CD8-positive, alpha-beta T cell (primary cell): ENCODE measurements at regions of chr2 and their contacts with region 1.

Region 1: GRCh38 chr2:60756191-60757041 is at the start of gene PAPOLG:
- DNase-seq: peak; percentile 94 to 98 (median 97)
- ATAC-seq: peak; percentile 98
- H3K4me3 ChIP-seq: peak within 1 kb of the TSS; percentile 85 to 98
- H3K4me3 Mint-ChIP-seq: peak within 1 kb of the TSS; percentile 100
- H3K27ac ChIP-seq: peak within 1 kb of the TSS; percentile 86 to 91
- H3K27ac Mint-ChIP-seq: peak within 1 kb of the TSS; percentile 100
- H3K4me1 ChIP-seq: peaks cover 20% of the 10 kb centered on the region
- H3K4me1 Mint-ChIP-seq: peaks cover 43% of the 10 kb centered on the region
- H3K27me3 ChIP-seq: no peaks in the 10 kb centered on the region
- H3K27me3 Mint-ChIP-seq: no peaks in the 10 kb centered on the region
- CTCF ChIP-seq: no peak
- total RNA-seq, gene PAPOLG: 19.1 to 22.3 TPM

Region 2: GRCh38 chr2:59912042-59912441 is 844.4 kb before region 1 on chr2:
- CTCF ChIA-PET with region 1: no interaction called
- POLR2A ChIA-PET with region 1: no interaction called
- intact Hi-C with region 1: no loop called
- DNase-seq: peak in 1 of 9 experiments; percentile 11
- ATAC-seq: no peak
- H3K4me3 ChIP-seq: no peak overlapping the region
- H3K4me3 Mint-ChIP-seq: no peak overlapping the region
- H3K27ac ChIP-seq: no peak overlapping the region
- H3K27ac Mint-ChIP-seq: no peak overlapping the region
- H3K4me1 ChIP-seq: peaks cover 13% of the 10 kb centered on the region
- H3K4me1 Mint-ChIP-seq: peaks cover 23% of the 10 kb centered on the region
- H3K27me3 ChIP-seq: no peaks in the 10 kb centered on the region
- H3K27me3 Mint-ChIP-seq: no peaks in the 10 kb centered on the region
- CTCF ChIP-seq: no peak

Region 3: DNA sequence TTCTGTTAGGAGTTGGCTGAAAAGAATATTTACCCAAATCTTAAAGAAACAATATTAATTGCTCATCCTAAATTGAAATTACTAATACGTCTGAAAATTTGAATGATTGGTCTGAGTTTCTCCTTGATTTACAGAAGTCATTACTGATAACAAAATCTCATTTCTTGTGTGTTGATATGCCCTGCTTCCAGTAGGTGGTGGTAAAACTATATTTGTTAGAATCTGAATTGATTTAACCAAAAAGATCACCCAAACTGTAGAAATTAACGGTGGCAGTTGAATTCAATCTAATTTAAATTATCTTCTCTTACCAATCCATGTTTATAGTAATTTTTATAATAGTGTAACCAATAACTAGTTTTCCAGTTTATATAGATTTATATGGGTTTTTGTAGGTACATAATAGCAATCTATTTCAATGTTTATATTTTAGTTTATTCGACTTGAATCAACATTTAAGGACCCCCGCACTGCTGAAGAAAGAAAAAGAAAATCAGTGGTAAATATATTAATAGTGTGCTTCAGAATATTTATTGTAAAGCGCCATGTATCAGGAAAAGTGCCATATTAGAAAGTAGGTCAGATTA is 38.0 kb after region 1 on chr2:
- CTCF ChIA-PET with region 1: no interaction called
- POLR2A ChIA-PET with region 1: interaction called, 3 read pairs
- intact Hi-C with region 1: loop called in 1 of 2 experiments (anchors 2 kb)
- DNase-seq: peak in 2 of 9 experiments; percentile 49 to 61
- ATAC-seq: peak; percentile 59
- H3K4me3 ChIP-seq: no peak overlapping the region
- H3K4me3 Mint-ChIP-seq: no peak overlapping the region
- H3K27ac ChIP-seq: no peak overlapping the region
- H3K27ac Mint-ChIP-seq: no peak overlapping the region
- H3K4me1 ChIP-seq: no peaks in the 10 kb centered on the region
- H3K4me1 Mint-ChIP-seq: peaks cover 11% of the 10 kb centered on the region
- H3K27me3 ChIP-seq: no peaks in the 10 kb centered on the region
- H3K27me3 Mint-ChIP-seq: no peaks in the 10 kb centered on the region
- CTCF ChIP-seq: peak; percentile 85

Region 4: GRCh38 chr2:61016808-61017555 is 260.6 kb after region 1 on chr2:
- CTCF ChIA-PET with region 1: no interaction called
- POLR2A ChIA-PET with region 1: interaction called, 5 read pairs
- intact Hi-C with region 1: loop called in 1 of 2 experiments (anchors 1 kb)
- DNase-seq: peak; percentile 30 to 81 (median 67)
- ATAC-seq: peak; percentile 69
- H3K4me3 ChIP-seq: peak overlapping the region; percentile 80 to 99
- H3K4me3 Mint-ChIP-seq: peak overlapping the region; percentile 99
- H3K27ac ChIP-seq: peak overlapping the region; percentile 69 to 84
- H3K27ac Mint-ChIP-seq: peak overlapping the region; percentile 95
- H3K4me1 ChIP-seq: peaks cover 21% of the 10 kb centered on the region
- H3K4me1 Mint-ChIP-seq: peaks cover 46% of the 10 kb centered on the region
- H3K27me3 ChIP-seq: no peaks in the 10 kb centered on the region
- H3K27me3 Mint-ChIP-seq: no peaks in the 10 kb centered on the region
- CTCF ChIP-seq: no peak

Region 5: GRCh38 chr2:61764035-61764800 is 1007.8 kb after region 1 on chr2:
- CTCF ChIA-PET with region 1: no interaction called
- POLR2A ChIA-PET with region 1: no interaction called
- intact Hi-C with region 1: loop called in 1 of 2 experiments (anchors 10 kb)
- DNase-seq: peak; percentile 91 to 99 (median 94)
- ATAC-seq: peak; percentile 97
- H3K4me3 ChIP-seq: peak overlapping the region; percentile 90 to 91
- H3K4me3 Mint-ChIP-seq: peak overlapping the region; percentile 96
- H3K27ac ChIP-seq: peak overlapping the region; percentile 99 to 100
- H3K27ac Mint-ChIP-seq: peak overlapping the region; percentile 98
- H3K4me1 ChIP-seq: no peaks in the 10 kb centered on the region
- H3K4me1 Mint-ChIP-seq: peaks cover 12% of the 10 kb centered on the region
- H3K27me3 ChIP-seq: no peaks in the 10 kb centered on the region
- H3K27me3 Mint-ChIP-seq: no peaks in the 10 kb centered on the region
- CTCF ChIP-seq: no peak

Region 6: GRCh38 chr2:61888267-61889055 is 1132.0 kb after region 1 on chr2 and contains the start of gene CCT4:
- CTCF ChIA-PET with region 1: no interaction called
- POLR2A ChIA-PET with region 1: no interaction called
- intact Hi-C with region 1: loop called in 1 of 2 experiments (anchors 10 kb)
- DNase-seq: peak; percentile 81 to 98 (median 92)
- ATAC-seq: peak; percentile 89
- H3K4me3 ChIP-seq: peak within 1 kb of the TSS; percentile 85 to 100
- H3K4me3 Mint-ChIP-seq: peak within 1 kb of the TSS; percentile 95
- H3K27ac ChIP-seq: peak within 1 kb of the TSS; percentile 99
- H3K27ac Mint-ChIP-seq: peak within 1 kb of the TSS; percentile 98
- H3K4me1 ChIP-seq: peaks cover 28% of the 10 kb centered on the region
- H3K4me1 Mint-ChIP-seq: peaks cover 33% of the 10 kb centered on the region
- H3K27me3 ChIP-seq: no peaks in the 10 kb centered on the region
- H3K27me3 Mint-ChIP-seq: no peaks in the 10 kb centered on the region
- CTCF ChIP-seq: no peak
- total RNA-seq, gene CCT4: 102 to 106 TPM